ENCODE measurements at regions of chr2 and their contacts with region 1.

Region 1: DNA sequence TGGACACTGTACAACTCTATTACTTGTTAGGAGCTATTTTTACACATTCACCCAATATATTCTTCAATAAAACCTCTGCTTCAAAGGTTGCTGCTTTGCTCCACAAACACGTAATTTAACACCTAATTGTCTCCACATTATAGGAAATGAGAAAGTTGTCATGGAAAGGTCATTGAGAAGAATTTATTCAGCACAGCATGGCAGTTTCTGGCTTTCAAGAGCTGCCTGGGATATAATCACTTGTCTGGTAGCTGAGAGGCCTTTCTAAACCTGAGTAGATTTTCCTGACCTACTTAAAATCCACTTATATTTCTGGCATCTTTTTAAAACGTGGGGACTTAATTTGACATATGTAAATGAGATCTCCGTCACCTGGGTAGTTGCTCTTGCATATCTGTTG is 216.1 kb downstream of the ZNF804A start:
- DNase-seq: no peak
- H3K4me3 ChIP-seq: no peak overlapping the region
- CTCF ChIP-seq: no peak
- POLR2A ChIP-seq: no peak

Region 2: GRCh38 chr2:182824767-182825158 is 1989.7 kb before region 1 on chr2:
- intact Hi-C with region 1: loop called (anchors 10 kb)
- DNase-seq: no peak
- H3K4me3 ChIP-seq: no peak overlapping the region
- CTCF ChIP-seq: no peak
- POLR2A ChIP-seq: no peak

Region 3: DNA sequence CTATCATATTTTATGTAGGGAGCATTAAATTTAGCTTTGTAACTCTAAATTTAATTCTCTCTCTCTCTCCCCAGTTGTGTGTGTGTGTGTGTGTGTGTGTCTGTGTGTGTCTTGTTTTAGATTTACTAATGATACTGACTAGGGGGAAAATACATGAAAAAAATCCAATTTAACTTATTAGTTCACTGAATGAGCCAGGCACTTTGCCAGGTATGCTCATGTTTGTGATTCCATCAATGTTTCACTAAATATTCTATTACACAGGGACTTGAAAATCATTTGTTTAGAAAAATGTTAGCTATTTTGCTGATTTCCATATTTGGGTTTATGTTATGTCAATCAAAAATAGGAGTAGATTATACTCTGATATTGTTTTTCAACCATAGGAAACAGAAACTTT is 419.8 kb before region 1 on chr2:
- intact Hi-C with region 1: no loop called
- DNase-seq: no peak
- H3K4me3 ChIP-seq: no peak overlapping the region
- CTCF ChIP-seq: no peak
- POLR2A ChIP-seq: no peak